Esophagus muscularis mucosa (tissue), 4 donors: ENCODE measurements at regions of chr9 and their contacts with region 1.

Region 1: GRCh38 chr9:137521405-137521985 is 28.7 kb downstream of the PNPLA7 start:
- DNase-seq: no peak
- H3K4me3 ChIP-seq: no peak overlapping the region
- H3K27ac ChIP-seq: no peak overlapping the region
- H3K4me1 ChIP-seq: peaks cover 0 to 4% (median 2%) of the 10 kb centered on the region in 4 donors
- H3K27me3 ChIP-seq: no peaks in the 10 kb centered on the region
- CTCF ChIP-seq: no peak
- EP300 ChIP-seq: no peak
- POLR2A ChIP-seq: no peak

Region 2: GRCh38 chr9:137295238-137295811 is 226.2 kb before region 1 on chr9:
- intact Hi-C with region 1: loop called (anchors 10 kb)
- DNase-seq: no peak
- H3K4me3 ChIP-seq: peak overlapping the region; percentile 45 to 66 (median 50)
- H3K27ac ChIP-seq: peak overlapping the region in 2 of 4 donors; percentile 71 to 78
- H3K4me1 ChIP-seq: peaks cover 27 to 56% (median 39%) of the 10 kb centered on the region in 4 donors
- H3K27me3 ChIP-seq: peaks cover 4 to 92% (median 55%) of the 10 kb centered on the region in 4 donors
- CTCF ChIP-seq: peak; percentile 46 to 81 (median 80)
- EP300 ChIP-seq: no peak
- POLR2A ChIP-seq: no peak

Region 3: GRCh38 chr9:137423004-137423874 is 98.3 kb before region 1 on chr9 and contains the starts of genes EXD3 and NOXA1:
- intact Hi-C with region 1: loop called (anchors 10 kb)
- DNase-seq: peak; percentile 96
- H3K4me3 ChIP-seq: peak within 1 kb of the TSS; percentile 79 to 100 (median 96)
- H3K27ac ChIP-seq: peak within 1 kb of the TSS; percentile 69 to 80 (median 78)
- H3K4me1 ChIP-seq: peaks cover 20 to 36% (median 29%) of the 10 kb centered on the region in 4 donors
- H3K27me3 ChIP-seq: no peaks in the 10 kb centered on the region
- CTCF ChIP-seq: peak; percentile 71 to 88 (median 88)
- EP300 ChIP-seq: no peak
- POLR2A ChIP-seq: no peak
- total RNA-seq, gene EXD3: 8.3 to 22.3 (median 14.2) TPM
- total RNA-seq, gene NOXA1: 2.1 to 4.0 (median 3.0) TPM

Region 4: GRCh38 chr9:137461663-137462395 is 59.7 kb before region 1 on chr9:
- intact Hi-C with region 1: loop called (anchors 10 kb)
- DNase-seq: no peak
- H3K4me3 ChIP-seq: peak overlapping the region in 1 of 4 donors; percentile 30
- H3K27ac ChIP-seq: no peak overlapping the region
- H3K4me1 ChIP-seq: peaks cover 23 to 46% (median 43%) of the 10 kb centered on the region in 4 donors
- H3K27me3 ChIP-seq: no peaks in the 10 kb centered on the region
- CTCF ChIP-seq: no peak
- EP300 ChIP-seq: no peak
- POLR2A ChIP-seq: no peak

Region 5: DNA sequence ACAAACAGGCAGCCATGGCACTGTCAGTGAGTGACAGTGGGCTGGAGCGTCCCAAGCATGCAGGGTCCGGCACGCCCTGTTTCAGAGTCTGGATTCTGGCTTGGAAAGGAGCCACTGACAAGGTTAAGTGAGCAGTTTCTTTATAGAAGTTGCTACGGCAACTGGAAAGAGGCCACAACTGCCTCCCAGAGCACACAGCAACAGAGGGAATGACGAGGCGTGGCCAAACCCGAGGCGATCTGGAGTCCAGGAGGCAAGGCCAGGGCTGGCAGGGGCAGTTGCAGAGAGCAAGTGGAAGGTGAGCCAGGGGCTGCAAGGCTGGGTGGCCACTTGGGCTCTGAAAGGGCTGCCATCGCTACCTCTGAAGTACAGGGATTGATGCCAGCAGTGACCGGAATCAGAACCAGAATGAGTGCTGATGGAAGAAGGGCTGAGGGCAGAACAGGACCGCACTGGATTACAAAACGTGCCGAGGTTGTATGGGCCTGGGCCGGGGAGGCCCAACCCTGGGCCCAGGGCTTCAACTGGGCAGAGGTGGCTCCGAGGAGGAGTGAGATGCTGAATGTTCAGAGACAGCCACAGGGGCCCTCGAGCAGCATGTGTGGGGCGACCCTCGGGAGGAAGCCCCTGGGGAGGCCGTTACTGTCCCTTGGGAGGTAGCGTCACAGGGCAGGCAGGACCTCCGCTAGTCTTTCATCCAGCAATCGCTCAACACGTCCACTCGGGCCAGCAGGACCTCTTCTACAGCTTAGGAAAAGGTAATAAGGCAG is 34.8 kb after region 1 on chr9:
- intact Hi-C with region 1: no loop called
- DNase-seq: no peak
- H3K4me3 ChIP-seq: no peak overlapping the region
- H3K27ac ChIP-seq: peak overlapping the region; percentile 1 to 60 (median 42)
- H3K4me1 ChIP-seq: peaks cover 7 to 31% (median 24%) of the 10 kb centered on the region in 4 donors
- H3K27me3 ChIP-seq: peaks cover 0 to 3% (median 0%) of the 10 kb centered on the region in 4 donors
- CTCF ChIP-seq: no peak
- EP300 ChIP-seq: no peak
- POLR2A ChIP-seq: no peak